ENCODE measurements at regions of chr9 and their contacts with region 1.

Region 1: DNA sequence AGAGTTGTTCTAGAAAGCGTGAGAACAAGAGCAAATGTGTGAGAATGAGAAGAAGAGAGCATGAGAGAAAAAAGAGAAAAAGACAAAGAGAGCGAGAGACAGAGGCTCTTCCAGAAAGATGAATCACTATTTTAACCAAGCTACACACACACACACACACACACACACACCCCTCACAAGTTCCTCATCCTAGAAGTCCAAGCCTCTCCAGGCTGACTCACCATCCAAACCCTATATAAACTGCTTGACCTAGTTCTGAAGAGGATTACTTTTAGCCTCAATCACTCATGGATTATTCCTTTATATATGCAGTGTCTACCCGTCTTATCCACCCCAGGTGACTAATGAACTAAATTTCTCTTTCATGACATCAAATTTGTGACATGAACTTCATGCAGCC is 37.6 kb downstream of the C9orf57 start:
- DNase-seq: no peak
- H3K4me3 Mint-ChIP-seq: no peak overlapping the region
- H3K27ac Mint-ChIP-seq: no peak overlapping the region
- H3K4me1 Mint-ChIP-seq: no peaks in the 10 kb centered on the region
- H3K27me3 Mint-ChIP-seq: no peaks in the 10 kb centered on the region

Region 2: GRCh38 chr9:70639853-70640814 is 1382.7 kb before region 1 on chr9:
- CTCF ChIA-PET with region 1: no interaction called
- intact Hi-C with region 1: loop called (anchors 10 kb)
- DNase-seq: peak; percentile 9
- H3K4me3 Mint-ChIP-seq: no peak overlapping the region
- H3K27ac Mint-ChIP-seq: no peak overlapping the region
- H3K4me1 Mint-ChIP-seq: no peaks in the 10 kb centered on the region
- H3K27me3 Mint-ChIP-seq: peaks cover 10% of the 10 kb centered on the region

Region 3: GRCh38 chr9:71604197-71605063 is 418.4 kb before region 1 on chr9:
- CTCF ChIA-PET with region 1: interaction called, 6 read pairs
- intact Hi-C with region 1: loop called (anchors 1 kb)
- DNase-seq: peak; percentile 89
- H3K4me3 Mint-ChIP-seq: no peak overlapping the region
- H3K27ac Mint-ChIP-seq: no peak overlapping the region
- H3K4me1 Mint-ChIP-seq: no peaks in the 10 kb centered on the region
- H3K27me3 Mint-ChIP-seq: no peaks in the 10 kb centered on the region

Region 4: GRCh38 chr9:71801826-71802225 is 221.0 kb before region 1 on chr9:
- CTCF ChIA-PET with region 1: interaction called, 126 read pairs
- intact Hi-C with region 1: loop called (anchors 1 kb)
- DNase-seq: no peak
- H3K4me3 Mint-ChIP-seq: no peak overlapping the region
- H3K27ac Mint-ChIP-seq: no peak overlapping the region
- H3K4me1 Mint-ChIP-seq: peaks cover 11% of the 10 kb centered on the region
- H3K27me3 Mint-ChIP-seq: no peaks in the 10 kb centered on the region

Region 5: GRCh38 chr9:71819115-71819739 is 203.6 kb before region 1 on chr9:
- CTCF ChIA-PET with region 1: interaction called, 33 read pairs
- intact Hi-C with region 1: no loop called
- DNase-seq: peak; percentile 68
- H3K4me3 Mint-ChIP-seq: no peak overlapping the region
- H3K27ac Mint-ChIP-seq: no peak overlapping the region
- H3K4me1 Mint-ChIP-seq: peaks cover 16% of the 10 kb centered on the region
- H3K27me3 Mint-ChIP-seq: no peaks in the 10 kb centered on the region